Psoas muscle (tissue), 8 donors: ENCODE measurements at regions of chr15 and their contacts with region 1.

Region 1: DNA sequence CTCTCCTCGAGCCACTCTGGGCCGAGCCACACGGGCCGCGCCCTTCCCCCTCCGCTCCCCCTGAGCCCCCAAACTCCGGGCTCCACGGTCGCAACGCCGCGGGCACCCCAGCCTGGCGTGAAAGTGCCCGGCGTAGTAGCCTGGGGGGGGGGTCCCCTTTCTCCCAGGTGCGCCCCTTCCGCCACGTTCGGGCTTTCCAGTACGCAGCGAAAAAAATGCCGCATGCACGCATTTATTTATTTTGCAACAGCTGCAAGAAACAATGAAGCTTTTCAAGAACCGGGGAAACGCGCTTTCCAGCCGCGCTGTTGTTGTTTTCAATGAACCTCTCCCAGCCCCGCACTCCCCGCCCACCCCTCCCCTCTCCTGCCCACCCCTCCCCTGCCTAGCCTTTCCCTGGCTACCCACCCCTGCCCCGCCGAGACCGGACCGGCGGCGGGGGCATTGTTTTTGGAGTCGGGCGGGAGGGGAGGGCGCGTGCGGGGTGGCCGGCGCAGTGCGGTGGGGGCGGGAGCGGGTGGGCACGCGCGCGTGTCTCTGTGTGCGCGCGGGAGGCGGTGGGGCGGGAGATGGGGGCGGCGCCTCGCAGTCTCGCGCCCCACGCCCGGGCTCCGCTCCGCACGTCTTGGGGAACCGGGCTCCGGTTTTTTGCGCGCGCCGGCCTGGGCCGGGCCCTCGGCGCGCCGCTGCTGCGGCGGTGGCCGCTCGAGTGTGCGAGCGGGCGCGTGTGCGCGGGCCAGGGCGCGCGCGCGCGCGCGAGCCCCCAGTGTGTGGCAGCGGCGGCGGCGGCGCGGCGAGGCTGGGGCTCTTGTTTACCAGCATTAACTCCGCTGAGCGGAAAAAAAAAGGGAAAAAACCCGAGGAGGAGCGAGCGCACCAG is at the start of gene IGF1R:
- DNase-seq: peak; percentile 88 to 93
- ATAC-seq: peak; percentile 72 to 88 (median 84)
- H3K4me3 ChIP-seq: peak within 1 kb of the TSS; percentile 94
- H3K27ac ChIP-seq: peak within 1 kb of the TSS; percentile 92
- H3K4me1 ChIP-seq: peaks cover 10% of the 10 kb centered on the region
- H3K27me3 ChIP-seq: peaks cover 0 to 13% (median 10%) of the 10 kb centered on the region in 3 donors
- CTCF ChIP-seq: no peak
- total RNA-seq, gene IGF1R: 12.0 to 20.4 (median 15.9) TPM

Region 2: DNA sequence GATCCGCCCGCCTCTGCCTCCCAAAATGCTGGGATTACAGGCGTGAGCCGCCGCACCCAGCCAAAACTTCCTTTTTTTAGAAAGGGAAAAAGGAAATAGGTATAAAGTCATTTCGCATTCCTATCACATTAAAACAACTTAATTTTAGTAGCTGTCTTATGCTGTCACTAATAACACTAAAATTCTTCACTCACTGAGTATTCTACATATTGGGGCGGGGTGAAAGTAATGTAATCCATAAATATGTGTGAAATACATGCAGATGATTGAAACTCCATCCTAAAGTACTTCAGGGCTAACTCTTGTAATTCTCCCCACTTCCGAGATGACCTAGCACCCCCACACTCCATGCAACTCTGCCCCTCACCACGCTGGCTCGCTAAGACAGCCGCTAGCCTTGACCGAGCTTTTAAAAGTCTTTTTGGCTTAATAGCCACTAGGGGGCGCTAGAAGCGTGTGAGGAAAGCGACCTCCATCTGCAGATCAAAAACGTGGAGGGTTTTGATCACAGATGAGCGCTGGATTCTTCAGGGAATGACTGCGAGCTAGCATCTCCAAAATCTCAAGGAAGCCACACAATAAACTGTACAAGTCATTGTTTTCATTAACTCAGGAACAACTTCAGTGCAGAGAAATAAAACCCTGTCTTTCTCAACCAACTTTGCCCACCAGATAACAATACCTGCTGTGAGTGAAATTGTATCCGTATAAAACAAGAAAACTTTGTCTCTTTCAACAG is 129.0 kb before region 1 on chr15:
- intact Hi-C with region 1: loop called (anchors 2 to 5 kb)
- DNase-seq: no peak
- ATAC-seq: peak; percentile 71 to 94 (median 86)
- H3K4me3 ChIP-seq: no peak overlapping the region
- H3K27ac ChIP-seq: no peak overlapping the region
- H3K4me1 ChIP-seq: peaks cover 3% of the 10 kb centered on the region
- H3K27me3 ChIP-seq: no peaks in the 10 kb centered on the region
- CTCF ChIP-seq: peak; percentile 87

Region 3: DNA sequence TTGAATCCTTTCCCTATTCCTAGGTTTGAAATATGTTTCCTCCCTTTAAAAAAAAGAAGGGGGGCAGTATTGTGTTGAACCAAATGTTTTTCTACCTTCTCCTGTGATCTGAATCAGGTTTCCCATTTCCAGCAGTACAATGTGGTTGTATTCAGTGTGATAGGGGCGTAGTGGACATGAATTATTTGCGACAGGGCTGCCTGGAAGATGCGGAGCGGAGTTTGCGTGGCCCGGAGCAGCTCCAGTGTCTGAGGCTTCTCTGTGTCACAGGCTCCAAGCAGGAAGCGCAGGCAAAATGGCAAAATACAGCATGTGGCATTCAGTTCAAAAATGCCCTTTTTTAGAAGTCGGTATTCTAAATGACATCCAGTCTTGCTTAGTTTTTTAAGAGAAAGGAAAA is 205.1 kb after region 1 on chr15:
- intact Hi-C with region 1: loop called in 1 of 2 experiments (anchors 1 kb)
- DNase-seq: peak; percentile 88 to 89
- ATAC-seq: peak; percentile 84 to 91 (median 84)
- H3K4me3 ChIP-seq: peak overlapping the region; percentile 69
- H3K27ac ChIP-seq: peak overlapping the region; percentile 71
- H3K4me1 ChIP-seq: peaks cover 28% of the 10 kb centered on the region
- H3K27me3 ChIP-seq: no peaks in the 10 kb centered on the region
- CTCF ChIP-seq: no peak